Posterior vena cava (tissue), 2 donors: ENCODE measurements at regions of chr20 and their contacts with region 1.

Region 1: DNA sequence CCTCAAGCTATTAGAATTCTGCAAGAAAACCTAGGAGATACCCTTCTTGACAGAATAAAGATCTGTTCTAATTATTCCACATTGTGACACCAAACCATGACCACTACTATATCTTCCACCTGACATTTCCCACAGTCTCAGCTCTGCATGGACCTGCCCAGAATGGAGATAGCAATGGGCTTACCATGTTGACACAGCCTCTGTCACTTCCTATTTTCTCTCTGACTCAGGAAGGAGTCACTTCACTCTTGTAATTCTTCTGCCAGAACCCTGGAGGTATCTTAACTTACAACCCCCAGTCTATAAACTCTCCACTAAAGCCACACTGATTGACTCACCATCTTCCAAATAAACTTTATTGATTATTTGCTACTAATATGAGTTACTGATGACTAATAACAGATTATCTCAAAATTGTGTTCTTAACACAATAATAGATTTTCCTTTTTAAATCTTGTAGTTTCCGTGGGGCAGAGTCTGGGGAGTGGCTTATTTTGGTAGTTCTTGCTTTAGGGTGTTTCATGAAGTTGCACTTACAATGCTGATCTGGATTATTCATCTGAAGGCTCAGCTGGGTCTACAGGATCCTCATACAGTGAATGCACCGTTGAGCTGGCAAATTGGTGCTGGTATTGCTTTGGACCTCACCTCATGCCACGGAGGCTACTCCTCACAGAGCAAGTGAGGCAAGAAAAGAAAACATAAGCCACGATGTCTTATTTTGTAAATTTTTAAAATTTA is 869.9 kb downstream of the KIF16B start:
- DNase-seq: no peak

Region 2: DNA sequence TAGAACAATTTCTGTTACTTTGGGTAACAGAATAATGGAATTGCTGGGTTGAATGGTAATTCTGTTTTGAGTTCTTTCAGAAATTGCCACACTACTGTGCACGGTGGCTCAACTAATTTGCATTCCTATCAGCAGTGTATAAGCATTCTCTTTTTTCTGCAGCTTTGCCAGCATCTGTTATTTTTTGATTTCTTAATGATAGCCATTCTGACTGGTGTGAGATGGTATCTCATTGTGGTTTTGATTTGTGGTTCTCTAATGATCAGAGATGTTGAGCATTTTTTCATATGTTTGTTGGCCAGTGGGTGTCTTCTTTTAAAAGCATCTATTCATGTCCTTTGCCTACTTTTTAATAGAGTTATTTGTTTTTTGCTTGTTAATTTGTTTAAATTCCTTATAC is 23.1 kb after region 1 on chr20:
- intact Hi-C with region 1: loop called in 1 of 2 experiments (anchors 1 kb)
- DNase-seq: no peak